CD4-positive, alpha-beta T cell (primary cell): ENCODE measurements at regions of chr19 and their contacts with region 1.

Region 1: DNA sequence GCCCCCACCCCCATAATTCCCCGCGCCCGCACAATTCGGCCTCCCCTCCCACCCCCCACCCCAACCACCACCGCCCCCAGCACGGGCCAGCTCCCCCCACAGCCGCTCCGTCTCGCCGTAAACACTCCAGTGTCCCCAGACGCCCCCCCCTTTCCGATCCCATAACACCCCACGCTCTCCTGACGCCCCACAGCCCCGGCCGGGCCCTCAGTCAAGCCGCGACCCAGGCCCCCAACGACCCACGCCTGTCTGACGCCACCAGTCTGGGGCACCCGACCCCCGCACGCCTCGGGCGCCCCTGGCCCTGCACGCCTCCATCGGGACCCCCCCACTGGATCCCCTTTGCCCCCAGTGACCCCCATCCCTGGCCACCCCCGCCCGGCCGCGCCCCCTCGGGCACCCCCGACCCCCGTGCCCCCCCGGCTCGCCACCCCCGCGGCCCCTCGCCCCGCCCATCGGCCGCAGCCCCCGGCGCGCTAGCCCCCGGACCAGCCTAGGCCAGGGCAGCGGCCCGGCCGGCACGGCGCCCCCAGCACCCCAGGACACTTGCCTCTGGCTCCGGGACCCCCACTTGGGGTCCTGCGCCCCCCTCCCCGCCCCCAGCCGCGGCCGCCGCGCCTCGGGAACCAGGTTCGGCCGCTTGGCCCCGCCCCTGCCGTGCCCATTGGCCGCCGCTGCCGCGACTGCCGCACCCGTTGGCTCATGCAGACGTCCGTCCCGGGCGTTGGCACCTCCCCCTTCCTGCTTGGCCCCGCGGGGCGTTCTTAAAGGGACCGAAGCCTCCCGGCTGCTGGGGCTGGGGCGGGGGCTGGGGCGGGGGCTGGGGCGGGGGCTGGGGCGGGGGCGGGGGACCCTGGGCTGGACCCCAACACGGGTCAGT is at the start of gene FKBP8:
- DNase-seq: peak; percentile 89 to 97 (median 94)
- ATAC-seq: peak; percentile 93
- H3K4me3 ChIP-seq: peak within 1 kb of the TSS; percentile 63
- H3K4me3 Mint-ChIP-seq: peak within 1 kb of the TSS; percentile 98
- H3K27ac ChIP-seq: peak within 1 kb of the TSS; percentile 66 to 85
- H3K27ac Mint-ChIP-seq: peak within 1 kb of the TSS; percentile 96
- H3K4me1 ChIP-seq: peaks cover 28% of the 10 kb centered on the region
- H3K4me1 Mint-ChIP-seq: peaks cover 27% of the 10 kb centered on the region
- H3K27me3 ChIP-seq: no peaks in the 10 kb centered on the region
- H3K27me3 Mint-ChIP-seq: no peaks in the 10 kb centered on the region
- CTCF ChIP-seq: no peak
- total RNA-seq, gene FKBP8: 147 to 152 TPM

Region 2: DNA sequence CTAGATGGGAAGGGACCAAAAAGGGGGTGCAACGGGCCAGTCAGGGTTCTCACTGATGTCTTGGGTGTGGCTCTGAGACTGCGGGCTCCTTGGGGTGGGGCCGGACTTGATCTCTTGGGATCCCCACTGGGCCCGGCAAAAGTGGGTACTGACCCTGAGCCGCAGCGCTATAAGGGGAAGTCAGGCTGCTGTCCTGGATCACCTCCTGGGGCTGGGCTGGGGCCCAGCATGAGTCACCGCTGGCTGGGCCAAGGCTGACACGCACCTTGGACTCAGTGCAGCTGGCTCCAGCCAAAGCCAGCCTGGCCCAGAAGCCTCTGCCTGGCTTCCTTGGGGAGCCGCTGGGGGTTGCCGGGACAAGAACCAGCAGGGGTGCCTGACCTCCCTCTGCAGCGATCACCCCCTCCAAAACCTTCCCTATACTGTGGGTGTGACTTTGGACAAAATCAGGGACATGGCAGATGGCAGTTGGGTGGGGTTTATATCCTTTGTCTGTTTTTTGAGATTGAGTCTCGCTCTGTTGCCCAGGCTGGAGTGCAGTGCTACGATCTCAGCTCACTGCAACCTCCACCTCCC is 268.3 kb before region 1 on chr19:
- CTCF ChIA-PET with region 1: no interaction called
- POLR2A ChIA-PET with region 1: no interaction called
- intact Hi-C with region 1: no loop called
- DNase-seq: peak in 4 of 14 experiments; percentile 24 to 79 (median 56)
- ATAC-seq: no peak
- H3K4me3 ChIP-seq: no peak overlapping the region
- H3K4me3 Mint-ChIP-seq: peak overlapping the region; percentile 73
- H3K27ac ChIP-seq: no peak overlapping the region
- H3K27ac Mint-ChIP-seq: peak overlapping the region; percentile 77
- H3K4me1 ChIP-seq: peaks cover 66% of the 10 kb centered on the region
- H3K4me1 Mint-ChIP-seq: peaks cover 53% of the 10 kb centered on the region
- H3K27me3 ChIP-seq: no peaks in the 10 kb centered on the region
- H3K27me3 Mint-ChIP-seq: peaks cover 8% of the 10 kb centered on the region
- CTCF ChIP-seq: no peak

Region 3: GRCh38 chr19:18507021-18507726 is 36.0 kb before region 1 on chr19:
- CTCF ChIA-PET with region 1: no interaction called
- POLR2A ChIA-PET with region 1: no interaction called
- intact Hi-C with region 1: no loop called
- DNase-seq: peak in 6 of 14 experiments; percentile 30 to 72 (median 50)
- ATAC-seq: peak; percentile 63
- H3K4me3 ChIP-seq: peak overlapping the region; percentile 14
- H3K4me3 Mint-ChIP-seq: peak overlapping the region; percentile 14
- H3K27ac ChIP-seq: peak overlapping the region; percentile 47 to 77
- H3K27ac Mint-ChIP-seq: peak overlapping the region; percentile 89
- H3K4me1 ChIP-seq: peaks cover 89% of the 10 kb centered on the region
- H3K4me1 Mint-ChIP-seq: peaks cover 54% of the 10 kb centered on the region
- H3K27me3 ChIP-seq: no peaks in the 10 kb centered on the region
- H3K27me3 Mint-ChIP-seq: no peaks in the 10 kb centered on the region
- CTCF ChIP-seq: no peak

Region 4: DNA sequence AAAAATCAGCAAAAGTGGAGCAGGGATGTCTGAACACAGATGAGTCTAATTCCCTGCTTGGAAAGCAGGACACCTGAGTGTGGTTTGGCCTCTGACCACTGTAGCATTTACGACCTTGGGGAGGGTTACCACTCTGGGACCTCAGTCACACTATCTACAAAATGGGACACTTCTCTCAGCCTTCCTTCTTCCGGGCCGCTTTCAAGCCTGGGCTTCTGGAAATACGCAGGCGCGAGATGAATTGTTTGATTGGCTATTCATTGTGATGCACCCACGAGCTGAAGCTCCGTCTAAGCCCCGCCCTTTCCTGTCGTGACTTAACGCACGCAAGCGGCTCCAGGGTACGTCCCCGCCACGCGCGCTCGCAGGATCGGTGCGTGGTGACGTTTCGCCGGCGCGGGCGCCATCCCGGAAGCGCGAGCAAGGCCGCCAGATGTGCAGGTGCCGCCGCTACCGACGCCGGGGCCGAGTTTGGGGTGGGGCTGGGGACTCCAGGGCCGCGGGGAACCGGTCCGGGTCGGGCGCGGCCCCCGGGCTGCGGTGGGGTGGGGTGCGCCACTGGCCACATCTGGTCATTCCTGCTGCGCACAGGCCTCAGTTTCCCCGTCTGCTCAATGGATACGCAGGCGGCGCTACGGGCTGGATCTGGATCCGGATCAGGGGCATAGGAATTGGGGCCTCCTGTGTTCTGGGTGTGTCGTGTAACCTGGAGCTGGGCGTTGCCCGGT is 14.5 kb after region 1 on chr19 and contains the start of gene KXD1:
- CTCF ChIA-PET with region 1: interaction called, 6 read pairs
- POLR2A ChIA-PET with region 1: interaction called, 64 read pairs
- intact Hi-C with region 1: loop called (anchors 1 kb)
- DNase-seq: peak; percentile 93 to 100 (median 97)
- ATAC-seq: peak; percentile 99
- H3K4me3 ChIP-seq: peak within 1 kb of the TSS; percentile 99
- H3K4me3 Mint-ChIP-seq: peak within 1 kb of the TSS; percentile 94
- H3K27ac ChIP-seq: peak within 1 kb of the TSS; percentile 94 to 97
- H3K27ac Mint-ChIP-seq: peak within 1 kb of the TSS; percentile 98
- H3K4me1 ChIP-seq: peaks cover 30% of the 10 kb centered on the region
- H3K4me1 Mint-ChIP-seq: peaks cover 26% of the 10 kb centered on the region
- H3K27me3 ChIP-seq: no peaks in the 10 kb centered on the region
- H3K27me3 Mint-ChIP-seq: no peaks in the 10 kb centered on the region
- CTCF ChIP-seq: no peak
- total RNA-seq, gene KXD1: 64.2 to 66.9 TPM